HepG2 (cell line): ENCODE measurements at regions of chr22 and their contacts with region 1.

Region 1: GRCh38 chr22:41448189-41448808 is 1.7 kb upstream of the TOB2 start:
- DNase-seq: peak; percentile 99
- ATAC-seq: peak; percentile 80
- H3K4me3 ChIP-seq: peak overlapping the region; percentile 89 to 97 (median 90)
- H3K27ac ChIP-seq: peak overlapping the region; percentile 100
- H3K4me1 ChIP-seq: peaks cover 16% of the 10 kb centered on the region
- H3K27me3 ChIP-seq: no peaks in the 10 kb centered on the region; a peak in 1 of 5 replicates
- CTCF ChIP-seq: peak; percentile 34; the same call in 1 of the 2 replicates
- EP300 ChIP-seq: peak; percentile 89
- POLR2A ChIP-seq: peak; percentile 92 to 93
- RAD21 ChIP-seq: no peak; the same call in 1 of the 2 replicates

Region 2: DNA sequence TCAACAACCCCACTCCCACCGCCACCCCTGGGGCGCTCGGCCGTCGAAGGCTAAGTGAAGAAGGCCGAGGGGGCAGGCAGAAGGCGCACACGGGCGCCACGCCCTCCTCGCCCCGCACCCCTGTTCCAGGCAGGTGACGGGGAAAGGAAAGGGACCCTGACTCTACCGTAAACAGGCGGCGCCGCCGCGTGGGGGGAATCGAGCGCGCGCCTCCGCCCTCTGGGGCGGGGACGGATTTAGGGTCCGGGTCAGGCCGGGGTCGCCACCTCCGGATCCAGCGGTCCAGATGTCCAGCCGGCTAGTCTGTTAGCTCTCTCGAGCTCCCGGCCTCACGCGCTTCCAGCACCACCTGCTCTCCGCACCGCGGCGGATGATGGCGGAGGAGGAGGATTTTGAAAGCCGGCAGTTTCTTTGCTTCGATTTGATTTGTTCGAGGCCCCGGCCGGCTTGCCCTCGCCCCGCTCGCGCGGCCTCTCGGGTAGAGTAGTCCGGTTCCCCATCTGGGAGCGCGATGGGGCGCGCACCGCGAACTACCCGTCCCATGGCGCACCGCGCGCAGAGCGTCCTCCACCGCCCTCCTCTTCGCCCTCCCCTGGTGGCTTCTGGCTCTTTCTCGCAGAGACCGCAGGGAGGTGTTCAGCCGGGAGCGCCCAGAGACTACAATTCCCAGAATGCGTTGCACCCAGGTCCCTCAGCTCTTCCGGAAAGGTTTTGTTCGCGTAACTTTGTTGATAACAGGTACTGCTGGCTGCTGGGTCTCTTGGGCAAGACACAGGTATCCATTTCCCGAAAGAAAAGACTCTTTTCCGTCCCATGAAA is 162.3 kb before region 1 on chr22 and contains the start of gene RANGAP1:
- CTCF ChIA-PET with region 1: no interaction called
- POLR2A ChIA-PET with region 1: interaction called, 6 read pairs
- in situ Hi-C with region 1: no loop called
- intact Hi-C with region 1: loop called (anchors 10 kb)
- DNase-seq: peak; percentile 97
- ATAC-seq: peak; percentile 96
- H3K4me3 ChIP-seq: peak within 1 kb of the TSS; percentile 97 to 100 (median 98)
- H3K27ac ChIP-seq: peak within 1 kb of the TSS; percentile 88
- H3K4me1 ChIP-seq: peaks cover 58% of the 10 kb centered on the region
- H3K27me3 ChIP-seq: no peaks in the 10 kb centered on the region; a peak in 1 of 5 replicates
- CTCF ChIP-seq: peak; percentile 54
- EP300 ChIP-seq: peak; percentile 4 to 41; a peak in 1 of 4 replicates
- POLR2A ChIP-seq: peak; percentile 74 to 81
- RAD21 ChIP-seq: no peak
- total RNA-seq, gene RANGAP1: 71.7 and 83.9 TPM in 2 replicates

Region 3: DNA sequence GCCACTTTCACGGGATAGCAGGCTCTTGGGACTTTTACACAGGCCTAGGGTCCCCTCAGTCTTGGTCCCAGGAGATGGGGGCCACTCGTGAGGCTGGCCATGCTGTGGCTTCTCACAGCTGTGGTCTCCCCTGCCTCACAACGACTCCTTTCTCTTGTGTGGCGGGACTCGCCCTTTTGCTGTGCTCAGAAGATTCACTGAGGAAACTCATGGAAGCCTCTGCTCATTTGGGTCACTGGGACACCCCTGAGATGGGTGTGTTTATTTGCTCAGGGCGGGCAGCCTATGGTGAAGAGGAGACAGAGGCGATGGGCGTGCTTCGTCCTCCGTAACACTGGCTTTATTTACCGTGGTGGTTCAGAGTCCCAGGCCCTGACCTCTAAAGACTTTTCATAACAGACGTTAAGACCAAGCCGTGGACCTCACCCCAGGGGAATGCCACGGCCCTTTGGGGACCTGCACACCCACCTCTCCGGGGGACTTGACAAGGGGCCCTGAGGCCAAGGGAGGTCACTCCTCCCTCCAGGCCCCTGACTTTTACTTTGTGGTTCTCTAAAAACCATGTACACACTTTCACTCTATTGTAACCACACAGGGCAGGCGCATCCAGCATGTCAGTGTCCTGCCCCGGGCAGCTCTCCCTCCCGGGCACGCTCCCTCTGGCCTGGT is 51.0 kb before region 1 on chr22:
- CTCF ChIA-PET with region 1: no interaction called
- POLR2A ChIA-PET with region 1: interaction called, 31 read pairs
- in situ Hi-C with region 1: no loop called
- intact Hi-C with region 1: no loop called
- DNase-seq: peak; percentile 91
- ATAC-seq: peak; percentile 96
- H3K4me3 ChIP-seq: peak overlapping the region; percentile 21 to 67 (median 41)
- H3K27ac ChIP-seq: peak overlapping the region; percentile 92
- H3K4me1 ChIP-seq: peaks cover 64% of the 10 kb centered on the region
- H3K27me3 ChIP-seq: no peaks in the 10 kb centered on the region
- CTCF ChIP-seq: no peak
- EP300 ChIP-seq: peak; percentile 54 to 75; a peak in 3 of 4 replicates
- POLR2A ChIP-seq: peak; percentile 36 to 58; a peak in 3 of 4 replicates
- RAD21 ChIP-seq: no peak

Region 4: GRCh38 chr22:41403532-41404318 is 44.6 kb before region 1 on chr22:
- CTCF ChIA-PET with region 1: no interaction called
- POLR2A ChIA-PET with region 1: interaction called, 31 read pairs
- in situ Hi-C with region 1: no loop called
- intact Hi-C with region 1: no loop called
- DNase-seq: peak; percentile 76
- ATAC-seq: peak; percentile 92
- H3K4me3 ChIP-seq: peak overlapping the region in 1 of 3 experiments; percentile 56; a peak in 1 of 6 replicates
- H3K27ac ChIP-seq: no peak overlapping the region
- H3K4me1 ChIP-seq: peaks cover 47% of the 10 kb centered on the region
- H3K27me3 ChIP-seq: no peaks in the 10 kb centered on the region
- CTCF ChIP-seq: peak; percentile 100
- EP300 ChIP-seq: no peak
- POLR2A ChIP-seq: no peak
- RAD21 ChIP-seq: peak; percentile 98

Region 5: DNA sequence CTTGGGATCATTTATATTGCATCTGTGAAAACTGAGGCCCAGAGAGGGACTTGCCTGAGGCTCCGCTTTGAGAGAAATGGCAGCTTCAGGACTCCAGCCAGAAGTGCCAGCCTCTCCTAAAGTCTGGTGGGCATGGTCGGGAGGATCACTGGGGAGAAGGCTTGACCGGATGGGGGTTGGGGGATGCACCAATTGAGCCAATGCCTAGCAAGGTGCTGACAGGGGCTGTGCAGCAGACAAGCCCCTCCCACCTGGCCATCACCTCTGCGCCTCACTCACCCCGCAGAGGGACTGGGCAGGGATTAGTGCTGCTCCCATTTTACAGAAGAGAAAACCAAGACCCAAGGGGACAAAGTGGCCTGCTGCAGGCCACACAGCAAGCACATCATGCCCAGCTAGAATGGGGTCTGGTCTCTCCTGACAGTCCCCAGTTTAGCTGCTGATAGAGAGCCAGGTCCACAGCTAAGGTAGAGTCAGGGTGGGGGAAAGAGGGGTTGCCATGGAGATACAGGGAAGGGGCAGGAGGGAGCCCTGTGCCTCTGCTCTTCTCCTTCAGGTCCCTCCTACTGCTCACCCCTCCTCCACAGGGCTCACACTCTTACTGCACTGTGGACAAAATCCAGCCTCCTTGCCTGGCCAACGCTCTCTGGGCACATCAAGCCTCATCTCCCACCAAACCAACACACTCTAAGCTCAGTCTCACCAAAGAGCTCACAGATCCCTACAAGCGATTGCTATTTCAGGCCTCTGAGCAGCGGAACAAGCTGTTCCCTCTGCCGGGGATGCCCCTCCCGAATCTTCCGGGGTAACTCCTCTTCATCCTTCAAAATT is 37.1 kb before region 1 on chr22:
- CTCF ChIA-PET with region 1: no interaction called
- POLR2A ChIA-PET with region 1: interaction called, 18 read pairs
- in situ Hi-C with region 1: no loop called
- intact Hi-C with region 1: no loop called
- DNase-seq: no peak
- ATAC-seq: no peak; the same call in 2 of the 3 replicates
- H3K4me3 ChIP-seq: no peak overlapping the region; a peak in 1 of 6 replicates
- H3K27ac ChIP-seq: no peak overlapping the region
- H3K4me1 ChIP-seq: peaks cover 63% of the 10 kb centered on the region
- H3K27me3 ChIP-seq: peaks cover 0 to 1% of the 10 kb centered on the region in 2 experiments; a peak in 2 of 5 replicates
- CTCF ChIP-seq: no peak
- EP300 ChIP-seq: no peak
- POLR2A ChIP-seq: no peak
- RAD21 ChIP-seq: no peak

Region 6: GRCh38 chr22:41468381-41469217 is 20.3 kb after region 1 on chr22 and contains the starts of genes ACO2 and PHF5A:
- CTCF ChIA-PET with region 1: no interaction called
- POLR2A ChIA-PET with region 1: interaction called, 122 read pairs
- in situ Hi-C with region 1: no loop called
- intact Hi-C with region 1: loop called (anchors 1 kb)
- DNase-seq: peak; percentile 96
- ATAC-seq: peak; percentile 93
- H3K4me3 ChIP-seq: peak within 1 kb of the TSS; percentile 92 to 95 (median 92)
- H3K27ac ChIP-seq: peak within 1 kb of the TSS; percentile 98
- H3K4me1 ChIP-seq: peaks cover 66% of the 10 kb centered on the region
- H3K27me3 ChIP-seq: no peaks in the 10 kb centered on the region; a peak in 1 of 5 replicates
- CTCF ChIP-seq: no peak; the same call in 1 of the 2 replicates
- EP300 ChIP-seq: peak in 1 of 2 experiments; percentile 100; a peak in 2 of 4 replicates
- POLR2A ChIP-seq: peak; percentile 75 to 82
- RAD21 ChIP-seq: no peak
- total RNA-seq, gene ACO2: 39.3 and 45.6 TPM in 2 replicates
- total RNA-seq, gene PHF5A: 105 and 154 TPM in 2 replicates

Region 7: GRCh38 chr22:42261296-42261695 is 813.0 kb after region 1 on chr22:
- CTCF ChIA-PET with region 1: no interaction called
- POLR2A ChIA-PET with region 1: no interaction called
- in situ Hi-C with region 1: no loop called
- intact Hi-C with region 1: no loop called
- DNase-seq: no peak
- ATAC-seq: no peak
- H3K4me3 ChIP-seq: no peak overlapping the region
- H3K27ac ChIP-seq: no peak overlapping the region
- H3K4me1 ChIP-seq: peaks cover 32% of the 10 kb centered on the region
- H3K27me3 ChIP-seq: no peaks in the 10 kb centered on the region
- CTCF ChIP-seq: no peak
- EP300 ChIP-seq: no peak
- POLR2A ChIP-seq: no peak
- RAD21 ChIP-seq: no peak